CD14-positive monocyte (primary cell): ENCODE measurements at regions of chr5 and their contacts with region 1.

Region 1: GRCh38 chr5:142826741-142827732 is 56.9 kb downstream of the ARHGAP26 start:
- DNase-seq: peak; percentile 72 to 93 (median 89)
- H3K4me3 ChIP-seq: peak overlapping the region in 1 of 3 experiments; percentile 15
- H3K4me3 Mint-ChIP-seq: peak overlapping the region in 1 of 2 donors; percentile 22
- H3K27ac ChIP-seq: peak overlapping the region; percentile 56 to 81
- H3K27ac Mint-ChIP-seq: peak overlapping the region; percentile 88 to 94 (median 91)
- H3K4me1 ChIP-seq: peaks cover 43 to 75% of the 10 kb centered on the region in 2 donors
- H3K4me1 Mint-ChIP-seq: peaks cover 81% of the 10 kb centered on the region
- H3K27me3 ChIP-seq: no peaks in the 10 kb centered on the region
- H3K27me3 Mint-ChIP-seq: no peaks in the 10 kb centered on the region
- CTCF ChIP-seq: no peak

Region 2: DNA sequence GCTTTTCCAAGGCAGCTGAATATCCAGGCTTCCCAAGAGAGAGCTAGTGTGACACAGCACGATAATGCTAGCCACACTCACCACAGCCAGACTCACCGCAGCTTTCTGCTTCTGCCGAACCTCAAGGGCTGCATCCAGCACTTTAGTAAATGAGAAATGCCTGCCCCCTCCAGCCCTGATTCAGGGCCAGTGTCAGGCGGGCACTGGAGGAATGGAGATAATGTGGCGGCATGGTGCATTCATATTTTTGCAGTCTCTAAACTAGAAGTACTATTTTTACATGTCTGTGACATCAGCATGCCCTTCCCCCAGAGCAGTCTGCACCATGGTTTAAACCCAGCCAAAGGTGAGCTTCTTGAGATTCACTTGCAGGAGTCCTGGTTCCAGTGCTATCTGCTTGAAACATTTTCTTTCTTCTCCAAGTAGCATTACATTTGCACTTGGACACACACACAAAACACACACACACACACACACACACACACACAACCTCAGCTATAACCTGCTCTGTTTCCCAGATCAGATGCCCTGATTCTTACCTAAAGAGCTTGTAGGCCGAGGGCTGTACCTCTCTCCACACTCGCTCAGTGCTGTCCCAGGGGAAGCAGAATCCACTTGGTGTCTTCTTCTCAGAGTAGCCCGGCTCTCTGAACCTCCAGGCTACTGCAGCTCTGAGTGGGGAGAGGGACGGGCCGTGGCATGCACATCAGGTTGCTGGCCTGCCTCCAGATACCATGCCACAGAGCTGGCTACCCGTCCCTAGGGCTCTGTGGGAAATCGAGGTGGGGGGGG is 141.4 kb before region 1 on chr5 and contains the start of gene FGF1:
- intact Hi-C with region 1: no loop called
- DNase-seq: no peak
- H3K4me3 ChIP-seq: no peak within 1 kb of the TSS
- H3K4me3 Mint-ChIP-seq: no peak within 1 kb of the TSS
- H3K27ac ChIP-seq: no peak within 1 kb of the TSS
- H3K27ac Mint-ChIP-seq: no peak within 1 kb of the TSS
- H3K4me1 ChIP-seq: no peaks in the 10 kb centered on the region
- H3K4me1 Mint-ChIP-seq: no peaks in the 10 kb centered on the region
- H3K27me3 ChIP-seq: no peaks in the 10 kb centered on the region
- H3K27me3 Mint-ChIP-seq: peaks cover 5 to 9% (median 9%) of the 10 kb centered on the region in 3 donors
- CTCF ChIP-seq: no peak
- polyA plus RNA-seq, gene FGF1: not detected

Region 3: DNA sequence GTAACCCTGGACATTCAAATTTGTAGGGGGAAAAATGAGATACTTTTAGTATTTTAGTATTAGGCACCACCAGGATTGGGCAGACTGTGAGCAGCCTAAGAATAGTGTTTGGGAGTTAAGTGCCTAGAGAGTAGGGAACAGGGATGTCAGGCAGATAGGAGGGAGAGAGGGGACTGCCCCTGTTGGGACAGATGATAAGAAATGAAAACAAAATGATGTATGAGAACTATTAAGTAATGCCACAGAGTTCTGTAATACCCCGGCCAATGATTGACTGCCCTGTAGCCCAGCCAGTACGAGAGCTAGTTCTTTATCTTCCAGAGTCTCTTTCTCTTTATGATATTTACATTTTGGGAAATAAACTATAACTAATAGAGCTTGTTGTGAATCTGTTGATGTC is 32.5 kb before region 1 on chr5:
- intact Hi-C with region 1: loop called in 1 of 2 experiments (anchors 5 kb)
- DNase-seq: peak in 2 of 3 donors; percentile 64 to 65
- H3K4me3 ChIP-seq: peak overlapping the region in 1 of 3 experiments; percentile 53
- H3K4me3 Mint-ChIP-seq: peak overlapping the region in 1 of 2 donors; percentile 78
- H3K27ac ChIP-seq: peak overlapping the region; percentile 64 to 98
- H3K27ac Mint-ChIP-seq: peak overlapping the region; percentile 98 to 100 (median 99)
- H3K4me1 ChIP-seq: peaks cover 71 to 74% of the 10 kb centered on the region in 2 donors
- H3K4me1 Mint-ChIP-seq: peaks cover 96% of the 10 kb centered on the region
- H3K27me3 ChIP-seq: no peaks in the 10 kb centered on the region
- H3K27me3 Mint-ChIP-seq: peaks cover 0 to 4% (median 2%) of the 10 kb centered on the region in 3 donors
- CTCF ChIP-seq: no peak

Region 4: GRCh38 chr5:143066556-143067281 is 239.7 kb after region 1 on chr5:
- intact Hi-C with region 1: no loop called
- DNase-seq: peak in 2 of 3 donors; percentile 15 to 29
- H3K4me3 ChIP-seq: no peak overlapping the region
- H3K4me3 Mint-ChIP-seq: peak overlapping the region in 1 of 2 donors; percentile 22
- H3K27ac ChIP-seq: peak overlapping the region in 1 of 2 donors; percentile 63
- H3K27ac Mint-ChIP-seq: peak overlapping the region; percentile 15 to 86 (median 69)
- H3K4me1 ChIP-seq: peaks cover 47 to 49% of the 10 kb centered on the region in 2 donors
- H3K4me1 Mint-ChIP-seq: peaks cover 49% of the 10 kb centered on the region
- H3K27me3 ChIP-seq: no peaks in the 10 kb centered on the region
- H3K27me3 Mint-ChIP-seq: peaks cover 0 to 4% (median 1%) of the 10 kb centered on the region in 3 donors
- CTCF ChIP-seq: no peak